ENCODE measurements at regions of chr10 and their contacts with region 1.

Region 1: DNA sequence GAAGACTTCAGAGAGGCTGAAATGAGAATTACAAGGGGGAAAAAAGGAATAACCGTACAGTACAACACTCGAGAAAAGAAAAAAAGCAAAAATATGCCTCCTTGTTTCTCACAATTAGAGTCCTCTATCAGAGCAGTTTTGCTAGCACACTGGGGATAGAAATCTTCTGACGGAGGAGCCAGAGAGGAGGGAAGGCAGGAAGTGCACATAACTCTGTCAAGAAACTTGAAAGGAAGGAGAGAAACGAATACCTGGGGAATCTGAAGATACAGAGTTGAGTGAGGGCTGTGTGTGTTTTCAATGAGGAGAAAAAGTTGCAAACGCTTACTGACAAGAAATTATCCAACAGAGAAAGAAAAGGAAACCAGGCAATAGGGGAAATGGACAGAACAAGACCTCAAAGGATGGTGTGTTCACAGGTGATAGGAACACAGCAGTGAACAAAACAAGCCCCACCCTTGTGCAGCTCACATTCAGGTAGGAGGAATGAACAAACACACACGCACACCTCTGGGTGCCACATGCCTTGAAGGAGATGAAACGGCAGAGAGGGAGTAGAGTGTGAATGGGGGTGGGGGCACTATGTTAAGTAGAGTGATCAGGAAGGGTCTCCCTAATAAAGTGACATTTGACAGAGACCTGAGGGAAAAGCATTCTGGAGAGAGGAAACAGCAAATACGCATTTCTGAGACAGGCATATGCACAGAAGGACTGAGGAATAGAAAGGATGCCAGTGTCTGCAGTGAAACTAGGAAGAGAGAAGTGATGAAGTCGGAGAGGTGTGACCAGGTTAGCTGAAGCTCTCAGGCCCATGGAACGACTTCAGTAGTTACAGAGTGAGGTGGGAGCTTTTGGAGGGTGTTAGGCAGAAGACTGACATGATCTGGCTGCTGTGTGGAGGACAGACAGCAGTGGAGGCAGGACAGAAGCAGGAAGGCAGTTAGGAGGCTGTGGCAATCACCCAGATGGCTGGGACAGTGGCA is 46.7 kb upstream of the SPOCK2 start:
- DNase-seq: no peak
- ATAC-seq: peak; percentile 65
- H3K4me3 ChIP-seq: no peak overlapping the region
- H3K27ac ChIP-seq: peak overlapping the region; percentile 78
- H3K4me1 ChIP-seq: peaks cover 14% of the 10 kb centered on the region
- H3K27me3 ChIP-seq: no peaks in the 10 kb centered on the region
- CTCF ChIP-seq: no peak

Region 2: GRCh38 chr10:72702868-72703581 is 567.9 kb after region 1 on chr10:
- CTCF ChIA-PET with region 1: no interaction called
- POLR2A ChIA-PET with region 1: interaction called, 15 read pairs
- in situ Hi-C with region 1: no loop called
- intact Hi-C with region 1: no loop called
- DNase-seq: no peak
- ATAC-seq: no peak
- H3K4me3 ChIP-seq: no peak overlapping the region
- H3K27ac ChIP-seq: no peak overlapping the region
- H3K4me1 ChIP-seq: no peaks in the 10 kb centered on the region
- H3K27me3 ChIP-seq: no peaks in the 10 kb centered on the region
- CTCF ChIP-seq: no peak